ENCODE measurements at regions of chr18 and their contacts with region 1.

Region 1: GRCh38 chr18:23871410-23871809 is 143.1 kb upstream of the TTC39C start:
- DNase-seq: peak; percentile 30 to 86 (median 80)
- ATAC-seq: peak; percentile 99
- H3K4me3 ChIP-seq: no peak overlapping the region
- H3K4me3 Mint-ChIP-seq: peak overlapping the region; percentile 56 to 82 (median 74)
- H3K27ac ChIP-seq: peak overlapping the region; percentile 25
- H3K27ac Mint-ChIP-seq: peak overlapping the region; percentile 26 to 99 (median 95)
- H3K4me1 ChIP-seq: peaks cover 38 to 52% of the 10 kb centered on the region in 2 donors
- H3K4me1 Mint-ChIP-seq: peaks cover 26 to 59% (median 47%) of the 10 kb centered on the region in 7 donors
- H3K27me3 ChIP-seq: no peaks in the 10 kb centered on the region
- H3K27me3 Mint-ChIP-seq: peaks cover 0 to 32% (median 0%) of the 10 kb centered on the region in 5 donors

Region 2: DNA sequence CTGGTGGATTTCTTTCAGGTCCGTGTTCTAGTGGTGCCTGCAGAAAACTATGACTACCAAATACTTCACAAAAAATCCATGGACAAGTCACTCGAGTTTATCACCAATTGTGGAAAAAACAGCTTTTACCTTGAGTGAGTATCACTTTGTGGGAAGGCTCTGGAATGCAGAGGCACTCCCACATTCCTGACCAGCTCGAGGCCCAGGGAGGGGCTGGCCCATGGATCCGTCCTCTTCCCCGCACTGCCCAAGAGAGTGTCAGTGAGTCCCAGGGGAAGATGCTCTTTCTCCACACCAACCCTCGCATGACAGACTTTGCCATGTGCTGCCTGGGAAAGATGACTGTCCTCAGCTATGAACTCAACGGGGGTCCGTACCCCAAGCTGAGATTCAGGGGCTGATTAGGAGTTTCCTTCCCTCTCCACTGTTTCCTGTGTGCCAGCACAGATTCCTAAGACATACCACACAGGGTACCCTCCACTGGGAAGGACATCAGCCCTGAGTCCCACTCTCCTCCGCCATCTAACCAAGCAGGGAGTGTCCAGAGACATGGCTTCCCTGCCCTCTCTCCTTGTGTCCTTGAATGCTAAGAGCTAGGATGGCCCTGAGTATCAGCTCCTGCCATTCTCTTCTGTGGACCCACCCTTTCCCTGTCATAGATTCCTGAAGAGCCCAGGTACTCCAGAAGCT is 26.3 kb before region 1 on chr18:
- CTCF ChIA-PET with region 1: no interaction called
- POLR2A ChIA-PET with region 1: no interaction called
- intact Hi-C with region 1: no loop called
- DNase-seq: no peak
- ATAC-seq: no peak
- H3K4me3 ChIP-seq: no peak overlapping the region
- H3K4me3 Mint-ChIP-seq: no peak overlapping the region
- H3K27ac ChIP-seq: no peak overlapping the region
- H3K27ac Mint-ChIP-seq: peak overlapping the region in 2 of 9 donors; percentile 39 to 48
- H3K4me1 ChIP-seq: no peaks in the 10 kb centered on the region
- H3K4me1 Mint-ChIP-seq: peaks cover 0 to 9% (median 4%) of the 10 kb centered on the region in 7 donors
- H3K27me3 ChIP-seq: no peaks in the 10 kb centered on the region
- H3K27me3 Mint-ChIP-seq: peaks cover 0 to 11% (median 0%) of the 10 kb centered on the region in 5 donors

Region 3: GRCh38 chr18:23884681-23885375 is 13.4 kb after region 1 on chr18:
- CTCF ChIA-PET with region 1: no interaction called
- POLR2A ChIA-PET with region 1: no interaction called
- intact Hi-C with region 1: loop called in 1 of 2 experiments (anchors 1 kb)
- DNase-seq: no peak
- ATAC-seq: no peak
- H3K4me3 ChIP-seq: no peak overlapping the region
- H3K4me3 Mint-ChIP-seq: peak overlapping the region in 5 of 10 donors; percentile 43 to 71 (median 55)
- H3K27ac ChIP-seq: no peak overlapping the region
- H3K27ac Mint-ChIP-seq: peak overlapping the region in 6 of 9 donors; percentile 31 to 75 (median 47)
- H3K4me1 ChIP-seq: peaks cover 0 to 11% of the 10 kb centered on the region in 2 donors
- H3K4me1 Mint-ChIP-seq: peaks cover 17 to 44% (median 30%) of the 10 kb centered on the region in 7 donors
- H3K27me3 ChIP-seq: no peaks in the 10 kb centered on the region
- H3K27me3 Mint-ChIP-seq: peaks cover 0 to 2% (median 0%) of the 10 kb centered on the region in 5 donors

Region 4: GRCh38 chr18:23918401-23919032 is 47.1 kb after region 1 on chr18:
- CTCF ChIA-PET with region 1: interaction called, 7 read pairs
- POLR2A ChIA-PET with region 1: no interaction called
- intact Hi-C with region 1: loop called in 1 of 2 experiments (anchors 2 kb)
- DNase-seq: peak; percentile 47 to 74 (median 61)
- ATAC-seq: peak; percentile 87
- H3K4me3 ChIP-seq: no peak overlapping the region
- H3K4me3 Mint-ChIP-seq: no peak overlapping the region
- H3K27ac ChIP-seq: no peak overlapping the region
- H3K27ac Mint-ChIP-seq: peak overlapping the region in 3 of 9 donors; percentile 20 to 63 (median 62)
- H3K4me1 ChIP-seq: peaks cover 8 to 15% of the 10 kb centered on the region in 2 donors
- H3K4me1 Mint-ChIP-seq: peaks cover 10 to 31% (median 25%) of the 10 kb centered on the region in 7 donors
- H3K27me3 ChIP-seq: no peaks in the 10 kb centered on the region
- H3K27me3 Mint-ChIP-seq: peaks cover 0 to 27% (median 5%) of the 10 kb centered on the region in 5 donors